ENCODE measurements at regions of chr10 and their contacts with region 1.

Region 1: DNA sequence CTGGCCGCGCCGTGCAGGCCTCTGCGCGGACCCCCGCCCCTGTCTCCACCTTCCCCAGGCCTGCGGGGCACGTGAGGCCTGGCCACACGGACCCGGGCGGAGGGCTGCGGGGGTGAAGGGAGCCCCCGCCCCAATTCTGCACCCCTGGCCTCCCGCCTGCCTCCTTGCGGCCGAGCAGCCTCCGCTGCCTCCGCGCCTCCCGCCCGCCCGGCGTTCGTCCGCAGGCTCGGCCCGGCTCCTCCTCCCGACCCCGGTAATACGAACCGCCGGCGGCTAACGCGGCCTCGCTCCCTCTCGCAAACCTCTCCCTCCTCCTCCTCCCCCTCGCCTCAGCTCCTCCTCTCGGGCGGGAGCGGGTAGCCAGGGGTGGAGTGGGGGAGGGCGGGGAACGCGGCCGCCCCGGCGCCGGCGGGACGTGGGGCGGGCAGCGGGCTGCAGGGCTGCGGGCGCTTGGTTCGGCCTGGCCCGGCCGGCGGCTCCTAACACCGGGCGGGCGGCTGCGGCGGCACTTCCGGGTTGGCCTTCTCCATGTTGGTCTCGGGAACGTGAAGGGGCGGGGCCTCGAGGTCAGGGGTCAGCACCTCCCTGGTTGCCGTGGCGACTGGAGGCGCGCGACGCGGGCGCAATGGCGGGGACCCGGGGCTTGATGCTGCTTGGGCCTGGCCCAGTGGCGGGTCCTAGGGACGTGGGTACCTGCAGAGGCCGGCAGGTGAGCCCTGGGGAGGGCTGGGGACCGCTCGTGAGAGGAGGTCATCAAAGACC is at the start of gene RAB11FIP2:
- DNase-seq: peak; percentile 85
- H3K4me3 ChIP-seq: peak within 1 kb of the TSS; percentile 68 to 84 (median 72)
- H3K27ac ChIP-seq: peak within 1 kb of the TSS; percentile 68
- H3K4me1 ChIP-seq: peaks cover 13% of the 10 kb centered on the region
- H3K27me3 ChIP-seq: no peaks in the 10 kb centered on the region
- CTCF ChIP-seq: peak in 1 of 2 donors; percentile 25
- total RNA-seq, gene RAB11FIP2: 16.6 to 22.3 TPM

Region 2: GRCh38 chr10:117537436-117537903 is 509.1 kb before region 1 on chr10:
- CTCF ChIA-PET with region 1: no interaction called
- dilution Hi-C with region 1: no loop called
- in situ Hi-C with region 1: no loop called
- intact Hi-C with region 1: loop called (anchors 5 kb)
- DNase-seq: no peak
- H3K4me3 ChIP-seq: no peak overlapping the region
- H3K27ac ChIP-seq: no peak overlapping the region
- H3K4me1 ChIP-seq: peaks cover 12% of the 10 kb centered on the region
- H3K27me3 ChIP-seq: peaks cover 72% of the 10 kb centered on the region
- CTCF ChIP-seq: peak; percentile 44 to 55

Region 3: DNA sequence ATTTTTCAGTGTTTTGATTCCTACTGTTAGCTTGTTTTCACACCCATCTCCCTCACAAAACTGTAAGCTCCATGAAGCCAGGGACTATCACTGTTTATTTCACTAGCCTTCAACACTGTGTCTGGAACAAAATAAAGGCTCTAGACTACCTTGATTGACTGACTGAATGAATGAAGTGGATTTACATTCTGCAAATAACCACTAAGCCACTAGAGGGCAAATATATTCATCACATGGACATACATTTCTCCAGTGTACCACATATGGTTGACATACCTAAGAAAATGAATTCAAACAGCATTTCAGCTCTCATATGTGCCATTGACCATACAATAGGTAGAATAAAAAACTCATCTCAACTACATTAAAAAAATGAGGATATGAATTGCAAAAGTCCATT is 185.8 kb before region 1 on chr10:
- CTCF ChIA-PET with region 1: no interaction called
- dilution Hi-C with region 1: no loop called
- in situ Hi-C with region 1: no loop called
- intact Hi-C with region 1: loop called (anchors 2 kb)
- DNase-seq: no peak
- H3K4me3 ChIP-seq: no peak overlapping the region
- H3K27ac ChIP-seq: no peak overlapping the region
- H3K4me1 ChIP-seq: no peaks in the 10 kb centered on the region
- H3K27me3 ChIP-seq: no peaks in the 10 kb centered on the region
- CTCF ChIP-seq: peak; percentile 41 to 56

Region 4: GRCh38 chr10:117980216-117980615 is 66.4 kb before region 1 on chr10:
- CTCF ChIA-PET with region 1: no interaction called
- dilution Hi-C with region 1: no loop called
- in situ Hi-C with region 1: no loop called
- intact Hi-C with region 1: loop called (anchors 5 kb)
- DNase-seq: peak; percentile 85
- H3K4me3 ChIP-seq: no peak overlapping the region
- H3K27ac ChIP-seq: peak overlapping the region; percentile 60
- H3K4me1 ChIP-seq: peaks cover 12% of the 10 kb centered on the region
- H3K27me3 ChIP-seq: no peaks in the 10 kb centered on the region
- CTCF ChIP-seq: no peak

Region 5: DNA sequence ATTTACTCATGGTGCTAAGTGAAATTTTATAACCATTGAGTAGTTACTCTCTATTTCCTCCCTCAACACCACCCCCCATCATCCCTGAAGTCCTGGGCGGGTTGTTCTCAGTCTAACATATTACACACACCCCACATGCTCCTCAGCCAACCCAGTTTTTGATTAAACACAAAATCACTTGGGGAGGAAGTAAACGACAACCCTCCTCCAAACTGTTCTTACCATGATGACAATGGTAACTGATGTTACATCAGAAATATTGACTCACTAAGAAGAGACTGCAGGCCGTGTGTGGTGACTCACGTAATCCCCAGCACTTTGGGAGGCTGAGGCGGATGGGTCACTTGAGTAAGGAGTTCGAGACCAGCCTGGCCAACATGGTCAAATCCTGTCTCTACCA is 44.0 kb before region 1 on chr10:
- CTCF ChIA-PET with region 1: no interaction called
- dilution Hi-C with region 1: no loop called
- in situ Hi-C with region 1: no loop called
- intact Hi-C with region 1: loop called (anchors 2 kb)
- DNase-seq: peak; percentile 14
- H3K4me3 ChIP-seq: no peak overlapping the region
- H3K27ac ChIP-seq: no peak overlapping the region
- H3K4me1 ChIP-seq: no peaks in the 10 kb centered on the region
- H3K27me3 ChIP-seq: no peaks in the 10 kb centered on the region
- CTCF ChIP-seq: no peak

Region 6: GRCh38 chr10:118522791-118523498 is 476.4 kb after region 1 on chr10:
- CTCF ChIA-PET with region 1: no interaction called
- dilution Hi-C with region 1: no loop called
- in situ Hi-C with region 1: no loop called
- intact Hi-C with region 1: loop called (anchors 5 kb)
- DNase-seq: peak; percentile 96
- H3K4me3 ChIP-seq: no peak overlapping the region
- H3K27ac ChIP-seq: peak overlapping the region; percentile 84
- H3K4me1 ChIP-seq: peaks cover 31% of the 10 kb centered on the region
- H3K27me3 ChIP-seq: no peaks in the 10 kb centered on the region
- CTCF ChIP-seq: no peak